ENCODE measurements at regions of chr1 and their contacts with region 1.

Region 1: GRCh38 chr1:246907472-246907871 is 24.3 kb downstream of the AHCTF1 start:
- DNase-seq: no peak
- ATAC-seq: peak; percentile 76
- H3K4me3 ChIP-seq: no peak overlapping the region
- H3K27ac ChIP-seq: no peak overlapping the region
- H3K4me1 ChIP-seq: no peaks in the 10 kb centered on the region
- H3K27me3 ChIP-seq: no peaks in the 10 kb centered on the region
- CTCF ChIP-seq: peak; percentile 36 to 40 (median 37); a peak in 4 of 6 replicates
- EP300 ChIP-seq: no peak
- POLR2A ChIP-seq: no peak
- RAD21 ChIP-seq: peak; percentile 59

Region 2: GRCh38 chr1:246919902-246920301 is 12.4 kb after region 1 on chr1:
- CTCF ChIA-PET with region 1: interaction called, 10 read pairs
- POLR2A ChIA-PET with region 1: interaction called, 3 read pairs
- RAD21 ChIA-PET with region 1: no interaction called
- SMC1A ChIA-PET with region 1: interaction called, 10 read pairs
- in situ Hi-C with region 1: no loop called
- intact Hi-C with region 1: no loop called
- DNase-seq: no peak
- ATAC-seq: no peak
- H3K4me3 ChIP-seq: no peak overlapping the region
- H3K27ac ChIP-seq: no peak overlapping the region
- H3K4me1 ChIP-seq: no peaks in the 10 kb centered on the region
- H3K27me3 ChIP-seq: no peaks in the 10 kb centered on the region
- CTCF ChIP-seq: no peak
- EP300 ChIP-seq: no peak
- POLR2A ChIP-seq: no peak
- RAD21 ChIP-seq: no peak

Region 3: DNA sequence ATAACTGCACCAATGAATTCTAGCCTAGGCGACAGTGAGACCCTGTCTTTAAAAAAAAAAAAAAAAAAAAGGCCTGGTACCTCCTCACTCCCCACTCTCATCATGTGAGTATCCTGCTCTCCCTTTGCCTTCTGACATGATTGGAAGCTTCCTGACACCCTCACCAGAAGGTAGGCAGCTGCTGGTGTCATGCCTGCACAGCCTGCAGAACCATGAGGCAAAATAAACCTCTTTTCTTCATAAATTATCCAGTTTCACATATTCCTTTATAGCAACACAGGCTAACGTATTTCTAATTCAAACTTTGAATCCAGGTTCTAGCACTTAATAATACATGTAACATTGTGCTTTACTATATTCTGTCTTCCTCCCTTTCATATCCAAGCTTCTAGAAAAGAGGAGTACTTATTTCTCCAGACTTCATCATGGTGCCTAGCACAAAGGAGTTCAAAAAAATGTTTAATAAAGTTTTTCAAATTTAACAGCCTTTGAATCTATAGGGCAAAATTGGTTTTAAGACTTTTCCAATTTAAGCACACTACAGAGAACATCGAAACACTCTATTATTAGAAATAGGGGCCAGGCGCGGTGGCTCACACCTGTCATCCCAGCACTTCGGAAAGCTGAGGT is 18.6 kb after region 1 on chr1:
- CTCF ChIA-PET with region 1: interaction called, 10 read pairs
- POLR2A ChIA-PET with region 1: interaction called, 3 read pairs
- RAD21 ChIA-PET with region 1: no interaction called
- SMC1A ChIA-PET with region 1: no interaction called
- in situ Hi-C with region 1: no loop called
- intact Hi-C with region 1: no loop called
- DNase-seq: no peak
- ATAC-seq: no peak
- H3K4me3 ChIP-seq: no peak overlapping the region
- H3K27ac ChIP-seq: no peak overlapping the region
- H3K4me1 ChIP-seq: no peaks in the 10 kb centered on the region
- H3K27me3 ChIP-seq: no peaks in the 10 kb centered on the region
- CTCF ChIP-seq: no peak
- EP300 ChIP-seq: no peak
- POLR2A ChIP-seq: no peak
- RAD21 ChIP-seq: no peak

Region 4: GRCh38 chr1:246971090-246971721 is 63.7 kb after region 1 on chr1:
- CTCF ChIA-PET with region 1: interaction called, 26 read pairs
- POLR2A ChIA-PET with region 1: interaction called, 5 read pairs
- RAD21 ChIA-PET with region 1: interaction called, 27 read pairs
- SMC1A ChIA-PET with region 1: interaction called, 19 read pairs
- in situ Hi-C with region 1: no loop called
- intact Hi-C with region 1: loop called (anchors 1 kb)
- DNase-seq: no peak
- ATAC-seq: peak; percentile 60; the same call in 2 of the 3 replicates
- H3K4me3 ChIP-seq: no peak overlapping the region
- H3K27ac ChIP-seq: no peak overlapping the region
- H3K4me1 ChIP-seq: no peaks in the 10 kb centered on the region
- H3K27me3 ChIP-seq: no peaks in the 10 kb centered on the region
- CTCF ChIP-seq: peak; percentile 62 to 91 (median 65)
- EP300 ChIP-seq: no peak
- POLR2A ChIP-seq: no peak
- RAD21 ChIP-seq: peak; percentile 92

Region 5: DNA sequence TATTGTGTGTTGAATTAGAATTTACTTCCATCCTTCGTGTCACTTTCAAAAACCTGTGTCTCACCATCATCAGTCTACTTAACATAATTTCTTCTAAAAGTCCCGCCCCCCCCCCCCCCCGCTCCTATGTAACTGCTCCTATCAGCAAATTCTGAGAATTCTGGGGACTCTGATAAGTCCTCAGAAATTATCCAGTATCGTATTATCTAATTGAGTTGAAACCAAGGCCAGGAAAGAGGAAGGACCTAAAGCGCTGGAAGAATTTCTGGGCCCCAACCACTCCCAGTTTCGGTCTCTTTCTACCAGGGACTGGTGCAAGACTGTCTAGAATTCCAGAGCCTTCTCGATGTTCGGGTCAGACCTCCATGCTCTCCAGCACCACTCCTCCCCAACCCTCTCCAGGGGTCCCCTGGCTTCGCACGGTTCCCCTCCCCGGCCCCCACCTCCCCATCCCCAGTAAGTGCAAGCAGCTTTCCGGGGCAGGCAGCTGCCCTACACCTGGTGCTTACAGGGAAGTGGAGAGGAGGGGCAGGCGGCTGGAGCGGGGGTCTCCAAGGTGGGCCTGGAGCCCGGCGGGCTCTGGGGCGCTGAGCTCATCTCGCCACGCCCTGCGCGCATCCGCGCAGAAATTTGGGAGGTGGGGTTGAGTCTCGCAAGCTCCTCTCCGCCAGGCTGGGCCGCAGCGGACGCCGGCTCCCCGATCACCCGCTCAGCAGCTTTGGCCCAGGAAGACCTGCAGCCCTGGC is 440.2 kb after region 1 on chr1:
- CTCF ChIA-PET with region 1: no interaction called
- POLR2A ChIA-PET with region 1: no interaction called
- RAD21 ChIA-PET with region 1: no interaction called
- SMC1A ChIA-PET with region 1: no interaction called
- in situ Hi-C with region 1: no loop called
- intact Hi-C with region 1: no loop called
- DNase-seq: no peak
- ATAC-seq: no peak
- H3K4me3 ChIP-seq: no peak overlapping the region
- H3K27ac ChIP-seq: no peak overlapping the region
- H3K4me1 ChIP-seq: no peaks in the 10 kb centered on the region
- H3K27me3 ChIP-seq: no peaks in the 10 kb centered on the region
- CTCF ChIP-seq: no peak
- EP300 ChIP-seq: no peak
- POLR2A ChIP-seq: no peak
- RAD21 ChIP-seq: no peak